Activated CD8-positive, alpha-beta T cell treated with anti-CD3 and anti-CD28 coated beads for 36 hours (primary cell): ENCODE measurements at regions of chr11 and their contacts with region 1.

Region 1: DNA sequence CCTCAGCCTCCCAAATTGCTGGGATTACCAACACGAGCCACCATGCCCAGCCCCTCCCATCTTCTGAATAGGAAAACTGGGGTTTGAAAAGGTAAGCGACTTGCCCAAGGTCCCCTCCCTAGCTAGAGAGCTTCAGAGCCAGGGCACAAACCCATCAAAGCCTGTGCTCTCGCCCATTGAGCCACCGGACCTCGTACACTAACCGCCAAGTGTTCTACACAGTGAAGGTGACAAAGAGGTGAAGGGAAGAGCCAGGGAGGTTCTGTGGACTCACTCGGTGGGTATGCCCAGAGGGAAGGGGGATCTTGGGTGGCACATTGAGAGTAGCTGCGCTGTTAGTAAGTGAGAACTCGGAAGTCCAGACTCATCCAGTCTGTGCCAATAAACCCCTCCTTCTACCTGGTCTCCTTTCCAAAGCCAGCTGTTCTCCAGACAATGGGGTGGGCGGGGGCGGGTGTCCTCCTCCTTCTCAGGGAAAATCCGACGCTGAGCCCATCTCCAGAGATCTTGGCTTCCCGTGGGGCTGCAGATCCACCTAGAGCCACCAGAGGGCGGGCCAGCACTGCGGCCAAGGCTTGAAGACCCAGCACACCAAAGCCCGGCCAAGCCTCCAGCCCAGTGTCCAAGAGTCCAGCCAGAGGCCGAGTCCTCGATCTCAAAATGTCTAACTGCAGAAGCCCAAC is 3.2 kb upstream of the RTN4RL2 start:
- DNase-seq: peak; percentile 86
- ATAC-seq: peak; percentile 57
- H3K4me3 Mint-ChIP-seq: peak overlapping the region; percentile 48
- H3K27ac Mint-ChIP-seq: no peak overlapping the region
- H3K4me1 Mint-ChIP-seq: peaks cover 21% of the 10 kb centered on the region
- H3K27me3 Mint-ChIP-seq: peaks cover 34% of the 10 kb centered on the region
- CTCF ChIP-seq: peak; percentile 99

Region 2: GRCh38 chr11:57031556-57031955 is 425.5 kb before region 1 on chr11:
- CTCF ChIA-PET with region 1: no interaction called
- POLR2A ChIA-PET with region 1: no interaction called
- intact Hi-C with region 1: no loop called
- DNase-seq: no peak
- ATAC-seq: no peak
- H3K4me3 Mint-ChIP-seq: no peak overlapping the region
- H3K27ac Mint-ChIP-seq: no peak overlapping the region
- H3K4me1 Mint-ChIP-seq: no peaks in the 10 kb centered on the region
- H3K27me3 Mint-ChIP-seq: no peaks in the 10 kb centered on the region
- CTCF ChIP-seq: no peak

Region 3: GRCh38 chr11:57358543-57358961 is 98.5 kb before region 1 on chr11:
- CTCF ChIA-PET with region 1: interaction called, 19 read pairs
- POLR2A ChIA-PET with region 1: no interaction called
- intact Hi-C with region 1: no loop called
- DNase-seq: no peak
- ATAC-seq: no peak
- H3K4me3 Mint-ChIP-seq: no peak overlapping the region
- H3K27ac Mint-ChIP-seq: no peak overlapping the region
- H3K4me1 Mint-ChIP-seq: no peaks in the 10 kb centered on the region
- H3K27me3 Mint-ChIP-seq: peaks cover 13% of the 10 kb centered on the region
- CTCF ChIP-seq: no peak

Region 4: GRCh38 chr11:57426929-57427726 is 30.0 kb before region 1 on chr11 and contains the start of gene SLC43A3:
- CTCF ChIA-PET with region 1: interaction called, 84 read pairs
- POLR2A ChIA-PET with region 1: interaction called, 7 read pairs
- intact Hi-C with region 1: no loop called
- DNase-seq: peak; percentile 85
- ATAC-seq: peak; percentile 74
- H3K4me3 Mint-ChIP-seq: peak within 1 kb of the TSS; percentile 92
- H3K27ac Mint-ChIP-seq: peak within 1 kb of the TSS; percentile 95
- H3K4me1 Mint-ChIP-seq: peaks cover 34% of the 10 kb centered on the region
- H3K27me3 Mint-ChIP-seq: no peaks in the 10 kb centered on the region
- CTCF ChIP-seq: no peak
- total RNA-seq, gene SLC43A3: 294 to 300 TPM

Region 5: GRCh38 chr11:57444362-57445121 is 12.6 kb before region 1 on chr11:
- CTCF ChIA-PET with region 1: interaction called, 65 read pairs
- POLR2A ChIA-PET with region 1: no interaction called
- intact Hi-C with region 1: no loop called
- DNase-seq: no peak
- ATAC-seq: no peak
- H3K4me3 Mint-ChIP-seq: no peak overlapping the region
- H3K27ac Mint-ChIP-seq: no peak overlapping the region
- H3K4me1 Mint-ChIP-seq: no peaks in the 10 kb centered on the region
- H3K27me3 Mint-ChIP-seq: peaks cover 7% of the 10 kb centered on the region
- CTCF ChIP-seq: no peak

Region 6: DNA sequence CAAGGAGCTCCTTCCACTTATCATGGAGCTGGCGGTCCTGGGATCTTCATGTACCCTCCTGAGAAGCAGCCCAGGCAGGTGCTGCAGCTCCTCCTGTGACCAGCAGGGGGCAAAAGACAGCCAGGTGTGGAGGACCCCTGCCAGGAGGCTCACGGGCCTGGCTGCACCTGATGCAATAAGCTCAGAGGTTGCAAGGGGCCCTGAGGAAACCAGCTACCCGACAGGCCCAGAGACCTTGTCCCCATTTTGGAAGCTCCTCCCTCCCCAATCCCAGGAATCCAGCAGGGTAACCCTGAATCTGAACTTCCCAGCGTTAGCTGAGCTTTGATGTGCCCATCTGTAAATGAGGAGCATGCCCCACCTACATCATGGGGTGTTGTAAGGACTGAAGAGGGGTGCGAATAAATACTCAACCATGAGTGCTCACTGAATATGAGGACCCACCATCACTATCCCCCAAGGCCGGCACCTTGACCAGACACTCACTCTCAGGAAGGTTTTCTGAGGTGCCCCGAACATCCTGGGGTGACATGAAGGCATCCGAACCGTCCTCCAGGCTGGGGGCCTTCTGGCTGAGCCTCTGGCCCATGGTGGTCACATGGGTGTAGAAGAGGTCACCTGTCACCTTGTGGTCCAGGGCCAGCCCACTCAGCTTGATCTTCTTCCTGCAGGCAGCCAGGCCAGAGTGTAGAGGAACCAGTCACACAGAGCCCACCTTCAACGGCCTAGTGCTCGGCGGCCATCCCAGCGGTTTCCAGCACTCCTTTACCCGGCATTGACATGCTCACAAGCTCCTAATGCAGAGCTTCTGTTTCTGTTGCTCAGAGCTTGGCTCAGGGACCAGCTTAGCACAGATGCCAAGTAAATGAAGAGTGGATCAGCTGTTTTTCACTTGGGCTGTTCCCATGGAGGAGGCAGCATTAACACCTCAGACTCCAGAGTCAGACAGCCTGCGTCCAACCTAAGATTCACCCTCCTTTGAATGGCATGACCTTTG is 36.7 kb after region 1 on chr11:
- CTCF ChIA-PET with region 1: interaction called, 114 read pairs
- POLR2A ChIA-PET with region 1: no interaction called
- intact Hi-C with region 1: no loop called
- DNase-seq: peak; percentile 88
- ATAC-seq: peak; percentile 90
- H3K4me3 Mint-ChIP-seq: no peak overlapping the region
- H3K27ac Mint-ChIP-seq: peak overlapping the region; percentile 96
- H3K4me1 Mint-ChIP-seq: peaks cover 13% of the 10 kb centered on the region
- H3K27me3 Mint-ChIP-seq: no peaks in the 10 kb centered on the region
- CTCF ChIP-seq: peak; percentile 90

Region 7: GRCh38 chr11:57530596-57531507 is 73.8 kb after region 1 on chr11 and contains the start of gene TIMM10:
- CTCF ChIA-PET with region 1: interaction called, 192 read pairs
- POLR2A ChIA-PET with region 1: interaction called, 6 read pairs
- intact Hi-C with region 1: loop called (anchors 1 kb)
- DNase-seq: peak; percentile 97
- ATAC-seq: peak; percentile 96
- H3K4me3 Mint-ChIP-seq: peak within 1 kb of the TSS; percentile 82
- H3K27ac Mint-ChIP-seq: peak within 1 kb of the TSS; percentile 83
- H3K4me1 Mint-ChIP-seq: peaks cover 35% of the 10 kb centered on the region
- H3K27me3 Mint-ChIP-seq: no peaks in the 10 kb centered on the region
- CTCF ChIP-seq: no peak
- total RNA-seq, gene TIMM10: 75.2 to 84.2 TPM